ENCODE measurements at regions of chr6 and their contacts with region 1.

Region 1: GRCh38 chr6:44246663-44247337 is at the start of gene HSP90AB1:
- DNase-seq: peak; percentile 94
- H3K4me3 ChIP-seq: peak within 1 kb of the TSS; percentile 65 to 99
- H3K27ac ChIP-seq: peak within 1 kb of the TSS; percentile 86
- H3K4me1 ChIP-seq: peaks cover 13 to 24% of the 10 kb centered on the region in 2 experiments; a peak in 3 of 4 replicates
- H3K27me3 ChIP-seq: no peaks in the 10 kb centered on the region
- CTCF ChIP-seq: no peak
- EP300 ChIP-seq: peak in 1 of 2 experiments; percentile 50; a peak in 1 of 4 replicates
- RAD21 ChIP-seq: no peak
- polyA plus RNA-seq, gene HSP90AB1: 843 and 1,069 TPM in 2 replicates

Region 2: GRCh38 chr6:44226368-44227146 is 20.2 kb before region 1 on chr6:
- CTCF ChIA-PET with region 1: interaction called, 54 read pairs
- POLR2A ChIA-PET with region 1: interaction called, 49 read pairs
- DNase-seq: no peak
- H3K4me3 ChIP-seq: no peak overlapping the region
- H3K27ac ChIP-seq: peak overlapping the region in 1 of 2 experiments; percentile 69; a peak in 1 of 4 replicates
- H3K4me1 ChIP-seq: peaks cover 13 to 80% of the 10 kb centered on the region in 2 experiments
- H3K27me3 ChIP-seq: no peaks in the 10 kb centered on the region
- CTCF ChIP-seq: no peak
- EP300 ChIP-seq: no peak
- RAD21 ChIP-seq: no peak

Region 3: GRCh38 chr6:44367681-44368080 is 120.9 kb after region 1 on chr6:
- CTCF ChIA-PET with region 1: no interaction called
- POLR2A ChIA-PET with region 1: no interaction called
- DNase-seq: no peak
- H3K4me3 ChIP-seq: no peak overlapping the region
- H3K27ac ChIP-seq: no peak overlapping the region
- H3K4me1 ChIP-seq: no peaks in the 10 kb centered on the region
- H3K27me3 ChIP-seq: peaks cover 7% of the 10 kb centered on the region; the same call in 1 of the 2 replicates
- CTCF ChIP-seq: no peak
- EP300 ChIP-seq: no peak
- RAD21 ChIP-seq: no peak